Activated CD4-positive, alpha-beta T cell treated with anti-CD3 and anti-CD28 coated beads, Interleukin-2, amount 10 ng/mL, durations not matched to agents 24 days and 14 days (primary cell): ENCODE measurements at regions of chr11 and their contacts with region 1.

Region 1: GRCh38 chr11:67630228-67630942 is 648 bp upstream of the NUDT8 start:
- DNase-seq: peak; percentile 99
- H3K4me3 Mint-ChIP-seq: peak overlapping the region; percentile 86
- H3K27ac Mint-ChIP-seq: peak overlapping the region; percentile 93
- H3K4me1 Mint-ChIP-seq: peaks cover 12% of the 10 kb centered on the region
- H3K27me3 Mint-ChIP-seq: no peaks in the 10 kb centered on the region

Region 2: DNA sequence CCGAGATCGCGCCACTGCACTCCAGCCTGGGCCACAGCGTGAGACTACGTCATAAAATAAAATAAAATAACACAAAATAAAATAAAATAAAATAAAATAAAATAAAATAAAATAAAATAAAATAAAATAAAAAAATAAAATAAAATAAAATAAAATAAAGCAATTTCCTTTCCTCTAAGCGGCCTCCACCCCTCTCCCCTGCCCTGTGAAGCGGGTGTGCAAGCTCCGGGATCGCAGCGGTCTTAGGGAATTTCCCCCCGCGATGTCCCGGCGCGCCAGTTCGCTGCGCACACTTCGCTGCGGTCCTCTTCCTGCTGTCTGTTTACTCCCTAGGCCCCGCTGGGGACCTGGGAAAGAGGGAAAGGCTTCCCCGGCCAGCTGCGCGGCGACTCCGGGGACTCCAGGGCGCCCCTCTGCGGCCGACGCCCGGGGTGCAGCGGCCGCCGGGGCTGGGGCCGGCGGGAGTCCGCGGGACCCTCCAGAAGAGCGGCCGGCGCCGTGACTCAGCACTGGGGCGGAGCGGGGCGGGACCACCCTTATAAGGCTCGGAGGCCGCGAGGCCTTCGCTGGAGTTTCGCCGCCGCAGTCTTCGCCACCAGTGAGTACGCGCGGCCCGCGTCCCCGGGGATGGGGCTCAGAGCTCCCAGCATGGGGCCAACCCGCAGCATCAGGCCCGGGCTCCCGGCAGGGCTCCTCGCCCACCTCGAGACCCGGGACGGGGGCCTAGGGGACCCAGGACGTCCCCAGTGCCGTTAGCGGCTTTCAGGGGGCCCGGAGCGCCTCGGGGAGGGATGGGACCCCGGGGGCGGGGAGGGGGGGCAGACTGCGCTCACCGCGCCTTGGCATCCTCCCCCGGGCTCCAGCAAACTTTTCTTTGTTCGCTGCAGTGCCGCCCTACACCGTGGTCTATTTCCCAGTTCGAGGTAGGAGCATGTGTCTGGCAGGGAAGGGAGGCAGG is 46.9 kb before region 1 on chr11 and contains the start of gene GSTP1:
- intact Hi-C with region 1: loop called (anchors 1 kb)
- DNase-seq: peak; percentile 94
- H3K4me3 Mint-ChIP-seq: peak within 1 kb of the TSS; percentile 95
- H3K27ac Mint-ChIP-seq: peak within 1 kb of the TSS; percentile 94
- H3K4me1 Mint-ChIP-seq: peaks cover 40% of the 10 kb centered on the region
- H3K27me3 Mint-ChIP-seq: peaks cover 19% of the 10 kb centered on the region
- total RNA-seq, gene GSTP1: 305 and 312 TPM in 2 replicates

Region 3: GRCh38 chr11:67606492-67607201 is 23.7 kb before region 1 on chr11 and contains the start of gene NDUFV1:
- intact Hi-C with region 1: loop called (anchors 2 kb)
- DNase-seq: peak; percentile 99
- H3K4me3 Mint-ChIP-seq: peak within 1 kb of the TSS; percentile 95
- H3K27ac Mint-ChIP-seq: peak within 1 kb of the TSS; percentile 95
- H3K4me1 Mint-ChIP-seq: peaks cover 18% of the 10 kb centered on the region
- H3K27me3 Mint-ChIP-seq: peaks cover 10% of the 10 kb centered on the region
- total RNA-seq, gene NDUFV1: 304 and 321 TPM in 2 replicates

Region 4: GRCh38 chr11:67613960-67614715 is 16.2 kb before region 1 on chr11:
- intact Hi-C with region 1: loop called (anchors 1 kb)
- DNase-seq: peak; percentile 96
- H3K4me3 Mint-ChIP-seq: peak overlapping the region; percentile 84
- H3K27ac Mint-ChIP-seq: peak overlapping the region; percentile 99
- H3K4me1 Mint-ChIP-seq: peaks cover 16% of the 10 kb centered on the region
- H3K27me3 Mint-ChIP-seq: no peaks in the 10 kb centered on the region

Region 5: DNA sequence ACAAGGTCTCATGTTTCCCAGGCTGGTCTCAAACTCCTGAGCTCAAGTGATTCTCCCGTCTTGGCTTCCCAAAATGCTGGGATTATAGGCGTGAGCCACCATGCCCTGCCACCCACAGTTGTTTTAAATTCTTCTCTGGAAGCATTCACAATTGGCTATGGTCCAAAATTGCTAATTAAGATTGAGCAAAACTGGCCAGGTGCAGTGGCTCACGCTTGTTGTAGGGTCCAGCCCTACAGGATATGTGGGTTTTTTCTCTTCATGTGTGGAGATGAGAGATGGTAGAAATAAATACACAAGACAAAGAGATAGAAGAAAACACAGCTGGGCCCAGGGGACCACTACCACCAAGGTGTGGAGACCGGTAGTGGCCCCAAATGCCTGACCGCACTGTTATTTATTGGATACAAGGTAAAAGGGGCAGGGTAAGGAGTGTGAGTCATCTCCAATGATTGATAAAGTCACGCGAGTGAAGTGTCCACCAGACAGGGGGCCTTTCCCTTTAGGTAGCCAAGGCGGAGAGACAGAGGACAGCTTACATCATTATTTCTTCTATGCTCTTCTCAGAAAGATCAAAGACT is 28.4 kb after region 1 on chr11:
- intact Hi-C with region 1: loop called (anchors 1 kb)
- DNase-seq: no peak
- H3K4me3 Mint-ChIP-seq: no peak overlapping the region
- H3K27ac Mint-ChIP-seq: no peak overlapping the region
- H3K4me1 Mint-ChIP-seq: no peaks in the 10 kb centered on the region
- H3K27me3 Mint-ChIP-seq: no peaks in the 10 kb centered on the region

Region 6: GRCh38 chr11:67732045-67732787 is 101.8 kb after region 1 on chr11:
- intact Hi-C with region 1: no loop called
- DNase-seq: peak; percentile 71
- H3K4me3 Mint-ChIP-seq: no peak overlapping the region
- H3K27ac Mint-ChIP-seq: no peak overlapping the region
- H3K4me1 Mint-ChIP-seq: peaks cover 14% of the 10 kb centered on the region
- H3K27me3 Mint-ChIP-seq: peaks cover 16% of the 10 kb centered on the region